Esophagus squamous epithelium (tissue), 5 donors: ENCODE measurements at regions of chr10 and their contacts with region 1.

Region 1: GRCh38 chr10:123582084-123582989 is 83.8 kb upstream of the GPR26 start:
- DNase-seq: no peak
- H3K4me3 ChIP-seq: no peak overlapping the region
- H3K27ac ChIP-seq: no peak overlapping the region
- H3K4me1 ChIP-seq: peaks cover 0 to 18% (median 4%) of the 10 kb centered on the region in 3 donors
- H3K27me3 ChIP-seq: peaks cover 0 to 72% (median 0%) of the 10 kb centered on the region in 4 donors
- CTCF ChIP-seq: peak; percentile 42 to 80 (median 76)
- POLR2A ChIP-seq: no peak

Region 2: DNA sequence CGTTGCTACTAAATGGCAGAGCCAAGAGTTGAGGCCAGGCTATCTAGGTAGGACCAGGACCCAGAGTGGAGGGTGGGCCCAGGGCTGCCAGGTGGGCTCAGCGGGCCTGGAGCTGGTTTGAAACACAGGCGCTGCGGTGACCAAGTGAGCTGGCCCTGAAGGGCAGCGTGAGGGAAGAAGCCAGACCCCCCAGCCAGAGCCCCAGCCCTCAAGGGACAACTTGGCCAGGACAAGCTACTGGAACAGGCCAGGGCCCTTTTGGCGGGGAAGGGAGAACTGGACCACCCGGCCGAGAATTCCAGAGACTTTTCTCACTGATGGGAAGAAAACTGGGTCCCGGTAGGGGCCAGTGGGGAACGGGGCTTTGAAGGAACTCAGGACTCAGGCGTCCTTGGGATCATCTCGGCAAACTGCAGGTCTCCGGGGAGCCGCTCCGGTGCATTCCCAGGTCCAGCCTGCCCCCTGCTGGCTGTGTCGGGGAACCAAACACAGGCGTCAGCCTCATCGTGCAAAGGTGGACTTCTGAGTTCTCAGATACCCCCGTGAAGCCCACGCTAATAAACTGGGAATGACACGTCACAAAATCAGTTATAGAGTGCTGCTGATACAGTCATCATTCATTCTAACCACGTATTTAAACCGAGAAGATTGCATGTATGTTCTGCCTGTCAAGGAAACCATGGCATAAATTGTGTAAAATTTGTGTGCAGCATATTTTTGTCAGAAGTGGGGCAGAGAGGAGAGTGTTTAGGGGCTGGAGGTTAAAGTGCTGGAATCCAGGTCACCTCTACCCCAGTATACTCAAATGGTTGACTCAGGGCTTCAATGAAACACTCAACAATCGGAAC is 385.3 kb after region 1 on chr10:
- intact Hi-C with region 1: loop called (anchors 2 kb)
- DNase-seq: no peak
- H3K4me3 ChIP-seq: peak overlapping the region in 1 of 4 donors; percentile 14
- H3K27ac ChIP-seq: no peak overlapping the region
- H3K4me1 ChIP-seq: peaks cover 4 to 32% (median 12%) of the 10 kb centered on the region in 3 donors
- H3K27me3 ChIP-seq: peaks cover under 1 to 76% (median 4%) of the 10 kb centered on the region in 4 donors
- CTCF ChIP-seq: peak; percentile 56 to 94 (median 88)
- POLR2A ChIP-seq: no peak

Region 3: GRCh38 chr10:124388823-124389612 is 806.7 kb after region 1 on chr10:
- intact Hi-C with region 1: loop called (anchors 10 kb)
- DNase-seq: peak; percentile 46
- H3K4me3 ChIP-seq: peak overlapping the region; percentile 30 to 67 (median 50)
- H3K27ac ChIP-seq: peak overlapping the region; percentile 11 to 50 (median 31)
- H3K4me1 ChIP-seq: peaks cover 5 to 15% (median 10%) of the 10 kb centered on the region in 3 donors
- H3K27me3 ChIP-seq: peaks cover 0 to 14% (median 0%) of the 10 kb centered on the region in 4 donors
- CTCF ChIP-seq: peak; percentile 95 to 99 (median 98)
- POLR2A ChIP-seq: peak in 2 of 4 donors; percentile 17 to 24